ENCODE measurements at regions of chr19 and their contacts with region 1.

Region 1: DNA sequence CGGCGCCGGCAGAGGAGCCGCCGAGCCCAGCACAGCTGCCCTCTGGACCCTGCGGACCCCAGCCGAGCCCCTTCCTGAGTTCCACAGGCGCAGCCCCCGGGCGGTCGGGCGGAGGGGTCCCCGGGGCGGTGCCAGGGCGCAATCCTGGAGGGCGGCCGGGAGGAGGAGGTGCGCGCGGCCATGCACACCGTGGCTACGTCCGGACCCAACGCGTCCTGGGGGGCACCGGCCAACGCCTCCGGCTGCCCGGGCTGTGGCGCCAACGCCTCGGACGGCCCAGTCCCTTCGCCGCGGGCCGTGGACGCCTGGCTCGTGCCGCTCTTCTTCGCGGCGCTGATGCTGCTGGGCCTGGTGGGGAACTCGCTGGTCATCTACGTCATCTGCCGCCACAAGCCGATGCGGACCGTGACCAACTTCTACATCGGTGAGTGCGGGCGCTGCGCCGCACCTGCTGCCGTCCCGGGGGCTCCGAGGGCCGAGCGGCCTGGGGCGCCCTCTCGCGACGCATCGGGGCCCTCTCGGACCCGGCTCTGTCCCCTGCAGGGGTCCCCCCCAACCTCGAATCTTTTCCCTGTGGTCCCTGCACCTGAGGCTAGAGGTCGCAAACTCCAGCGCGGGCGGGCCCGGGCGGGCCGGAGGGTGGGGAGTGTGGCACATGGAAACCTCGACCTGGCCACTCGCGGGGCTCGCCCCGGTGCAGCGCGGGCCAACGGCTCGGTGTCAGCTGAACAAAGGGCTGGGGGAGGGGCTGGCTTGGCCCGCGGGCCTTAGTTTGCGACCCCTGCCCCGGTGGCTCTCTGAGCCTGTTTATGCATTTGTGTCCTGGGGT is at the start of gene KISS1R:
- DNase-seq: peak; percentile 80 to 85 (median 81)
- H3K4me3 ChIP-seq: peak within 1 kb of the TSS; percentile 18 to 68 (median 57)
- H3K27ac ChIP-seq: no peak within 1 kb of the TSS
- H3K4me1 ChIP-seq: peaks cover 0 to 49% (median 43%) of the 10 kb centered on the region in 4 experiments
- H3K27me3 ChIP-seq: peaks cover 0 to 41% (median 9%) of the 10 kb centered on the region in 5 experiments

Region 2: GRCh38 chr19:796692-797527 is 120.6 kb before region 1 on chr19 and contains the start of gene PTBP1:
- CTCF ChIA-PET with region 1: no interaction called
- POLR2A ChIA-PET with region 1: no interaction called
- DNase-seq: peak; percentile 100
- H3K4me3 ChIP-seq: peak within 1 kb of the TSS; percentile 67 to 97 (median 86)
- H3K27ac ChIP-seq: peak within 1 kb of the TSS; percentile 77 to 88
- H3K4me1 ChIP-seq: peaks cover 0 to 47% (median 42%) of the 10 kb centered on the region in 4 experiments
- H3K27me3 ChIP-seq: no peaks in the 10 kb centered on the region

Region 3: DNA sequence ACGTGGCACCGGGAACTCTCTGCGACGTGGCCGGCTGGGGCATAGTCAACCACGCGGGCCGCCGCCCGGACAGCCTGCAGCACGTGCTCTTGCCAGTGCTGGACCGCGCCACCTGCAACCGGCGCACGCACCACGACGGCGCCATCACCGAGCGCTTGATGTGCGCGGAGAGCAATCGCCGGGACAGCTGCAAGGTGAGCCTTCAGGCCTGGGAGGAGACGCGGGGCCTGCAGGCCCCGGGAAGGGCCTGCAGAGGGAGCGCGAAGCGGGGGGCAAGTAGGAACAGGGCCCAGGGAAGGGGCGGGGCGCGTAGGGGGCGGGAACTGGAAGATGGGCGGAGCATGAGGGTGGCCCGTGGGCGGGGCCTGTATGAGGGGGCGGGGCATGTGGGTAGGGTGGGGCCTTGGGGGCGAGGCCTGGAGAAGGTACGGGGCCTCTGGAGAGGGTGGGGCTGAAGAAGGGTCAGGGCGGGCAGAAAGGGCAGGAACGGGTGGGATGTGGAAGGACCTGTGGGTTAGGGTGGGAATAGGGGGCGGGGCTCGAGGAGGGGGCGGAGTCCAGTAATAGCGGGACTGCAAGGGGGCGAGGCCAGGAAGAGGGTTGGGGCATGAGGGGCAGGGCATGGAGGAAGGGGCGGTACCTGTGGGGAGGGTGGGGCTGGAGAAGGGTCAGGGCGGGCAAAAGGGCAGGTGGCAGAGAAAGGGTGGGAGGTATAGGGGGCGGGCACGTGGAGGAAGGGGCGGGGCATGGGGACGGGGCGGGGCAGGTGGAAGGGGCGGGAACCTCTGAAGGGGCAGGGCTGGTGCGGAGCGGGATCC is 55.6 kb before region 1 on chr19:
- CTCF ChIA-PET with region 1: interaction called, 23 read pairs
- POLR2A ChIA-PET with region 1: no interaction called
- DNase-seq: peak; percentile 82 to 94 (median 93)
- H3K4me3 ChIP-seq: peak overlapping the region in 3 of 7 experiments; percentile 46 to 61 (median 52)
- H3K27ac ChIP-seq: no peak overlapping the region
- H3K4me1 ChIP-seq: peaks cover 0 to 40% (median 37%) of the 10 kb centered on the region in 4 experiments
- H3K27me3 ChIP-seq: peaks cover 0 to 17% (median 11%) of the 10 kb centered on the region in 5 experiments

Measured in common myeloid progenitor, CD34-positive (primary cell).